Aorta (tissue), 5 donors: ENCODE measurements at regions of chr15 and their contacts with region 1.

Region 1: DNA sequence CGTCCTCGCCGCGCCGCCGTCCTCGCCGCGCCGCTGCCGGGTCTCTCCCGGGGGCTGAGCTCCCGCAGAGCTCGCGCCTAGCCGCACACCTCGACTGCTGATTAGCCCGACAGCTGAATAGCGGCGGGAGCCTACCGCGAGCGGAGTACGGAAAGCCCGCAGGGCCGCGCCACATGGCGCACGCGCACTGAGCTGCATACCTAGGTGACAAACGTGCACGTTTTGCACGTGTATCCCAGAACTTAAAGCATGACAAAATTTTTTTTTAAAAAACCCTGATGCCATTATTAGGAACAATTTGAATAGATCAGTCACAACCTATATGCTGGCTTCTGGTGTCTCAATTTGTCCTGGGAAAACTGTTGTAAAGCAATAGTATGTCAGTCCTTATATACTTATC is at the start of gene GOLGA8A:
- DNase-seq: peak; percentile 85 to 90
- ATAC-seq: no peak
- H3K4me3 ChIP-seq: peak within 1 kb of the TSS; percentile 50 to 56
- H3K27ac ChIP-seq: peak within 1 kb of the TSS in 1 of 2 donors; percentile 34
- H3K4me1 ChIP-seq: no peaks in the 10 kb centered on the region
- H3K27me3 ChIP-seq: no peaks in the 10 kb centered on the region
- total RNA-seq, gene GOLGA8A: 70.2 to 131 TPM

Region 2: GRCh38 chr15:34490417-34491193 is 52.9 kb after region 1 on chr15:
- intact Hi-C with region 1: no loop called
- DNase-seq: no peak
- ATAC-seq: no peak
- H3K4me3 ChIP-seq: no peak overlapping the region
- H3K27ac ChIP-seq: no peak overlapping the region
- H3K4me1 ChIP-seq: no peaks in the 10 kb centered on the region
- H3K27me3 ChIP-seq: no peaks in the 10 kb centered on the region

Region 3: GRCh38 chr15:34514251-34514670 is 76.6 kb after region 1 on chr15:
- intact Hi-C with region 1: loop called in 1 of 2 experiments (anchors 10 kb)
- DNase-seq: peak; percentile 62 to 70
- ATAC-seq: no peak
- H3K4me3 ChIP-seq: peak overlapping the region; percentile 68 to 76
- H3K27ac ChIP-seq: no peak overlapping the region
- H3K4me1 ChIP-seq: no peaks in the 10 kb centered on the region
- H3K27me3 ChIP-seq: no peaks in the 10 kb centered on the region

Region 4: DNA sequence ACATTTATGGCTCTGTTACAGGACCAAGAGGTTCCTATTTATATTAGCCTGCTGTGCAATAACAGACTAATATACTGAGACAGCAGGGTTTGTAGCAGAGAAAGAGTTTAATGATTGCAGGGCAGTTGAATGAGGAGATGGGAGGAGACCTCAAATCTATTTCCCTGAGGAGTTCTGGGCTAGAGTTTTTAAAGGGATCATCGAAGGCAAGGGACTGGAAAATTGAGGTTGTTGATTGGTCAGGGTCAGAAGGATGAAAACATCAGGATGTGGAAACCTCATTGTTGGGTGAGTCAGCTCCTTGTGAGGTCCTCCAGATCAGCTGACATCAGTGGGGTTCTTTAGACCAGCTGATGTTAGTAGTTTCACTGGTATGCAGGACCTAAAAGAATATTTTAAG is 206.4 kb after region 1 on chr15:
- intact Hi-C with region 1: no loop called
- DNase-seq: no peak
- ATAC-seq: no peak
- H3K4me3 ChIP-seq: no peak overlapping the region
- H3K27ac ChIP-seq: no peak overlapping the region
- H3K4me1 ChIP-seq: peaks cover 0 to 3% of the 10 kb centered on the region in 2 donors
- H3K27me3 ChIP-seq: no peaks in the 10 kb centered on the region

Region 5: DNA sequence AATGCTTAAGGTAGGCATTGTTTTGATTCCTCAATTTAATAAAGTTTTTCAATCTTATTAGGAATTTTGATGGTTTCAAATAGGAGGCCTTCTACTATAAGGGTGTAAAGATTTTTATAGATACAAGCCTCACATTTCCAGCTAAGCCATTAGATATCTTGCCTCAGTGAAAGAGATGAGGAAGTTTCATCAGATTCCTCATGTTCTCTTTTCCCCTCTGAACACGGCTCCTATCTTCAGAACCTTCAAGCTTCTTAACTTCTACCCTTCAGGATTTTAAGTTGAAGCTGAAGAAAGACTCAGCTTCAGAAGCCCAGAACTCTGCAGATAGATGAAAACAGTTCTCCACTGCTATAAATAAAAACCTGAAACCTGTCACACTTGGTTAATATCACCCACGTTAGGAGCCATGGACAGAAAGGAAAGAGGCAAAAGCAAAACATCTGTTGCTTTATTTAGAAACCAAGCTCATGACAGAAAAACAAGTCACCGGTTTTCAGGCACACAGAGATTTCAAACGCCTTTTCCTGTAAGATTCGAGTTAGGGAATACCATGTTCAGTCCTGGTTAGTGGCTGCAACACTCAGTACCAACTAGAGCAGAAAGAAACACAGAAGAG is 227.9 kb after region 1 on chr15:
- intact Hi-C with region 1: no loop called
- DNase-seq: no peak
- ATAC-seq: no peak
- H3K4me3 ChIP-seq: no peak overlapping the region
- H3K27ac ChIP-seq: no peak overlapping the region
- H3K4me1 ChIP-seq: no peaks in the 10 kb centered on the region
- H3K27me3 ChIP-seq: no peaks in the 10 kb centered on the region